GM13977 (cell line): ENCODE measurements at regions of chr15 and their contacts with region 1.

Region 1: GRCh38 chr15:66946578-66947164 is 118.7 kb upstream of the SMAD3 start:
- DNase-seq: peak; percentile 85
- CTCF ChIP-seq: peak; percentile 94

Region 2: DNA sequence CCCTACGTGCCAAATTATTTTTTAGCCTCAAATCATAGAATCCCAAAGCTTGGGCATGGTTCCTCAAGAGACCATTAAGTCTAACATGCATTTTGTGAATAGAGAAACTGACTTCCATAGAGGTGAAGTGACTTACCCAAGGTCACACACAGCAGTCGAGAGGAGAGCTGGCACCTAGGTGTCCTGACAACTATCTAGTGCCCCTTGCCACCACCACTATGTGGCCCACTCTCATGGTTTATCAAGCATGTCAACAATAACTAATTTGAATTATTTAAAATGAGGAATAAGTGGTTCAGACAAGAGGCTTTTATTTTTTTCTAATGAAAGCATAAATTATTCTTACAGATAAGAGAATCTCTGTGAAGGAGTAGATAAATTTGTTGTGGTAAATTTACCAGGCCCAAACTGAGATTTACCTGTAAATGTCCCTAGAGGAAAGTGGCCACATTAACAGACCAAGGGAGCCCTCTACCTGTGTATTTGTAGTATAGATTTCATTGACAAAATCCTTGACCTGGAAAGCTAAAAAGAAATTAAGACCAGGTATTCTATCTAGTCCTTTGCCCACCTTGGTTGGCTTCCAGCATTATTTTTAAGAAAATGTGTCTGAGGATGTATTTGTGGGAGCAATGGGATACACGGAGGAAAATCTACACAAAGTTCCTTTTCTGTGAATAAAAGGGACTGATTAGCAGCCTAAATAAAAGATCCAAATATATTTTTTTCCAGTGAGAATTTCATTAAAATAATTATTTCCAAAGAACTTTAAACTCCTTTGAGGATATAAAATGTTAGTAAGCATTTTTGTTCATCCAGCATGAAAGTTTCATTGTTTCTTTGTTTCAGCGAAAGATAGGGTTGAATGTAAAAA is 357.1 kb after region 1 on chr15:
- in situ Hi-C with region 1: loop called (anchors 5 kb)
- DNase-seq: peak; percentile 21
- CTCF ChIP-seq: peak; percentile 57

Region 3: GRCh38 chr15:67433495-67434099 is 486.9 kb after region 1 on chr15:
- in situ Hi-C with region 1: loop called (anchors 25 kb)
- DNase-seq: peak; percentile 48
- CTCF ChIP-seq: peak; percentile 69

Region 4: DNA sequence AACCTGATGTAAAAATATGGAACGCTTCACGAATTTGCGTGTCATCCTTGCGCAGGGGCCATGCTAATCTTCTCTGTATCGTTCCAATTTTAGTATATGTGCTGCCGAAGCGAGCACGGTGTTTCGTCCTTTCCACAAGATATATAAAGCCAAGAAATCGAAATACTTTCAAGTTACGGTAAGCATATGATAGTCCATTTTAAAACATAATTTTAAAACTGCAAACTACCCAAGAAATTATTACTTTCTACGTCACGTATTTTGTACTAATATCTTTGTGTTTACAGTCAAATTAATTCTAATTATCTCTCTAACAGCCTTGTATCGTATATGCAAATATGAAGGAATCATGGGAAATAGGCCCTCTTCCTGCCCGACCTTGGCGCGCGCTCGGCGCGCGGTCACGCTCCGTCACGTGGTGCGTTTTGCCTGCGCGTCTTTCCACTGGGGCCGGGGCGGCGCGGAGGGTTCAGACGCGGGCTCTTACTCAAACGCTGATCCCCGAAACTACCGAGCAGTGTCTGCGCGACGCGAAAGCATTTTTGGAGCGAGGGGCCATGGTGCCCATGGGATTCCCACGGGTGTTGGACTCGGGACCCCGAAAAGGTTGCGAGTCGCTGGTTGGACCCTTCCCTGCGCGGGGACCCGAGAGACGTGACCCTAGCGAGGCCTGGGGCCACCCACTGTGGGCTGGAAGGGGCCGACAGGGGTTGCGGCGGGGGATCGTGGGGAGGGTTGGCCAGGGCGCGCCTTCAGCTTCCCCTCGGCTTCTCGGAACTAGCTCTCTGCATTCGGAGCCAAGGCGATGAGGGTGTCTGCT is 893.5 kb after region 1 on chr15 and contains the start of gene RNU6-1:
- in situ Hi-C with region 1: loop called (anchors 10 kb)
- DNase-seq: peak; percentile 93
- CTCF ChIP-seq: no peak